Right ventricle myocardium superior (tissue), 1 donor: ENCODE measurements at regions of chr2 and their contacts with region 1.

Region 1: GRCh38 chr2:196295005-196295404 is 123.6 kb upstream of the STK17B start:
- DNase-seq: no peak
- ATAC-seq: no peak

Region 2: GRCh38 chr2:196453613-196454047 is 158.6 kb after region 1 on chr2:
- intact Hi-C with region 1: loop called (anchors 5 kb)
- DNase-seq: no peak
- ATAC-seq: peak; percentile 75

Region 3: DNA sequence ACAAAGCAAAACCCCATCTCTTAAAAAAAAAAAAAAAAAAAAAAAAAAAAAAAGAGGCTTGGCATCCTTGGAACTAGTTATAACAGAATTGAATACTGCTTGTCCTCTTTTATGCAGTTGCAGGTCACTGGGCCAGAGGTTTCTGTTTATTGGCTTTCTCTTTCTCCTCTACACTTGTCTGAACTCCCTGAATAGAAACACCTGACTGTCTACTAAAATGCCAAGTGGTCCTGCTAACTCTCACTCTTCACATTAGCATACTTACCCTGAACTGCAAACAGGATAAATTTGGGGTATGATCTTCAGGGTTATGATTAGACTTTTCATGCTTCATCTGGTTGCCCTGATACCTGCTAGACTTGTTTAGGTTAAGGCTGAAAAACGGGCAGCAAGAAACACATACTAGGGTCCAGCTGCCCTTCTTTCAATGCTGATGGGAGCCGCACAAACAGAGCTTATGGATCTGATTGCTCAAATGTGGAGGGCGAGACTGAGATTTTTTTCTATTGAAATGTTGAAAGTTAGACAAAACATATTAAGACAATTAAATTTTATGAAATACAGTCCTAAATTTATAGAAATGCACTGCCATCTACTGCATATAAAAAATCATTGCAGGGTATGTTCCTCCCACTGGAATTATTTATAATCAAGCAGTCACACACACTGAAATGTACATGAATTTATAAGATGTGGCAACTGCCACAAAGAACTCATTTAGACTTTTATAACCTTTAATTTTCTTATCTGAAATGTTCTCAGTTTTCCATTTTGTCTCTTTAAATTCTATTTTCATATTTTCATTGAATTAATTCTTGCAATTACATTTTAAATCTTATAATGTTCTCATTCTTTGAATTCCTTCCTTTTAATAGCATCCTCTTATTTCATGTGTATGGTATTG is 463.7 kb after region 1 on chr2:
- intact Hi-C with region 1: loop called (anchors 5 kb)
- DNase-seq: no peak
- ATAC-seq: peak; percentile 85